ENCODE measurements at regions of chr1 and their contacts with region 1.

Region 1: DNA sequence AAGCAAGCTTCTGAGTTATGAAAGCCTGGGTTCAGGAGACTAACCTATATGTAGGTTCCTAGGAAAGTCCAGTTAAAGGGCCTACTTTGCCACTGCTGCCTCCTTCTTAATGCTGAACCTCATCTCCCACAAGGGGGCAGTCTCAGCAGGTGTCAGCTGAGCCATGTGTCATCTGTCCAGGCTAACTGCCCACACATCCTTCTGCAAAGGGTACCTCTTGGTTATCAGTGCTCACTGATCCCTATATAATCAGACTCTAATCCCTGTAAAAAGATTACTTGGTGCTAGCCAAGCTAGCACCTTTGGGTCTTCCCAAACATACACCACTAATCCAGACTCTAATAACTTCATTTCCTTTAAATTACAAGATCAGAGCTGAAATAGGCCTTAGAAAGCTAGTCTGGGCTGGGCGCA is 9.0 kb downstream of the PRDX1 start:
- DNase-seq: peak; percentile 74
- H3K4me3 ChIP-seq: no peak overlapping the region
- H3K27ac ChIP-seq: no peak overlapping the region
- H3K4me1 ChIP-seq: peaks cover 19% of the 10 kb centered on the region
- CTCF ChIP-seq: peak; percentile 88

Region 2: DNA sequence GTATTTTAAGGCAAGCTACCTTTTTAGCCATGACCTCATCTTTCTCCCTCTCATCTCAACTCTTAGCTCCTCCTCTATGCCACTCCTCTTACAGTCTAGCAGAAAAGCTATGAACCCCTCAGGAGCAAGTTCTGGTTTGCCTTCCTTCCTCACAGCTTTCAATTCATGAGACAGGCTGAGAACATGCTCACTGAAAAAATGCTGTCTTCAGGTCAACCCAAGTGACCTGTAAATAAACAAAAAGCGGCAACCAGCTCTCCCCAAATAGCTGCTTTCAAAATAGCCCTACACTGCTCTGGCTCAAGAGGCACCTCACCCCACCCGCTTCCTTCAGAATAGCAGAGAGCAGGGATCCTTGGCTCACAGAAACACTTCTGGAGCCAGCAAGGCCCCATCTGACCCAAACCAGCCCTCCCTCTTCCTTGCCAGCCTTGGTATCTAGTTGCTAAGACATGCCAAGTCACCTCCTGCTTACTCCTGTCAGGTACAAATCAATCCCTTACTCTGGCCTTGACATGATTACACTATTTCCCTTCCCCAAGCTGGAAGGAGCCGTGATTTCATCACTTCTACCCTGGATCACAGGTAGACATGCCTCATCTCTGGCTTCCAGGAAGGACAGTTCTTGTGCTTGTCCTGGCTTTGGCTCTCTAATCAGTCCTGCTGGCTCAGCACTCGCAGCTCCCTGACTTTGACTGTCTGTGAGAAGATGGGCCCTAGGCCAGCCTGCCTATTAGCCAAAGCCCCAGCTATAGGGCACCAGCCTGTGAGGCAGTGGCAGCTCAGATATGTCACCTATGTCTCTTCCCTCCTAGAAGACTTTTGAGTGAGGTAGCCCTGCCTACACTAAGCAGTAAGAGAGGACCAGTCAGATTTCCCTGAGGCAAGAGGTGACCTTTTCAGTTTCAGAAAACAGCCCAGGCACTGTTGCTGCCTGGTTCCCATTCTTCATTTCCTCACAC is 163.7 kb before region 1 on chr1:
- CTCF ChIA-PET with region 1: no interaction called
- POLR2A ChIA-PET with region 1: no interaction called
- intact Hi-C with region 1: no loop called
- DNase-seq: no peak
- H3K4me3 ChIP-seq: no peak overlapping the region
- H3K27ac ChIP-seq: no peak overlapping the region
- H3K4me1 ChIP-seq: no peaks in the 10 kb centered on the region
- CTCF ChIP-seq: no peak

Region 3: GRCh38 chr1:45531873-45532272 is 19.2 kb after region 1 on chr1:
- CTCF ChIA-PET with region 1: no interaction called
- POLR2A ChIA-PET with region 1: no interaction called
- intact Hi-C with region 1: no loop called
- DNase-seq: no peak
- H3K4me3 ChIP-seq: no peak overlapping the region
- H3K27ac ChIP-seq: no peak overlapping the region
- H3K4me1 ChIP-seq: no peaks in the 10 kb centered on the region
- CTCF ChIP-seq: no peak

Region 4: DNA sequence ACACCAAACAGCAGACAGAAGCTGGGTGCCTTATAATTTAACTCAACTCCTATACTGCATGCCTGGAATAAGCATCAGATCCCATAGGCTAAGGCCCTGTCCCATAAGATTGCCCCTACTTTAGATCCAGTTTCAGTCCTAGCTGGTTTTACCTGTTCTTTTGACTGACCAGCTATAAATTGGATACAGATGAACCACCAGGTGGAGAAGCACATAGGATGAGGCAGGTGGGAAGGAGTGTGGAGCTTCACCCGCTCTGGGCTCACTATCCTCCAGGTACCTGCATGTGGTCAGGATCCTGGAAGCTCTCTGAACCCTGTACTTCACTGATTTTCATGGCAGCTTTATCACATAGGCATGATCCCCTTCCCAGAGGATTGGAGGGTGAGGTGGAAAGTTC is 342.1 kb after region 1 on chr1:
- CTCF ChIA-PET with region 1: no interaction called
- POLR2A ChIA-PET with region 1: no interaction called
- intact Hi-C with region 1: loop called (anchors 10 kb)
- DNase-seq: no peak
- H3K4me3 ChIP-seq: no peak overlapping the region
- H3K27ac ChIP-seq: no peak overlapping the region
- H3K4me1 ChIP-seq: peaks cover 3% of the 10 kb centered on the region
- CTCF ChIP-seq: no peak

Measured in OCI-LY7 (cell line).